ENCODE measurements at regions of chr12 and their contacts with region 1.

Region 1: GRCh38 chr12:32755654-32756475 is at the start of gene YARS2:
- DNase-seq: peak; percentile 96
- H3K4me3 ChIP-seq: peak within 1 kb of the TSS; percentile 92 to 97 (median 94)
- H3K27ac ChIP-seq: peak within 1 kb of the TSS; percentile 84 to 89 (median 88)
- H3K4me1 ChIP-seq: peaks cover 11 to 24% (median 21%) of the 10 kb centered on the region in 4 donors
- H3K27me3 ChIP-seq: peaks cover 0 to 1% (median 0%) of the 10 kb centered on the region in 4 donors
- CTCF ChIP-seq: peak; percentile 73 to 84 (median 79)
- EP300 ChIP-seq: no peak
- POLR2A ChIP-seq: no peak
- total RNA-seq, gene YARS2: 12.3 to 15.0 (median 14.7) TPM

Region 2: GRCh38 chr12:32482226-32482625 is 273.6 kb before region 1 on chr12:
- intact Hi-C with region 1: no loop called
- DNase-seq: no peak
- H3K4me3 ChIP-seq: no peak overlapping the region
- H3K27ac ChIP-seq: no peak overlapping the region
- H3K4me1 ChIP-seq: peaks cover 9 to 20% (median 12%) of the 10 kb centered on the region in 4 donors
- H3K27me3 ChIP-seq: no peaks in the 10 kb centered on the region
- CTCF ChIP-seq: no peak
- EP300 ChIP-seq: no peak
- POLR2A ChIP-seq: no peak

Region 3: GRCh38 chr12:32801269-32801980 is 45.6 kb after region 1 on chr12:
- intact Hi-C with region 1: no loop called
- DNase-seq: no peak
- H3K4me3 ChIP-seq: no peak overlapping the region
- H3K27ac ChIP-seq: no peak overlapping the region
- H3K4me1 ChIP-seq: no peaks in the 10 kb centered on the region
- H3K27me3 ChIP-seq: no peaks in the 10 kb centered on the region
- CTCF ChIP-seq: no peak
- EP300 ChIP-seq: no peak
- POLR2A ChIP-seq: no peak

Region 4: DNA sequence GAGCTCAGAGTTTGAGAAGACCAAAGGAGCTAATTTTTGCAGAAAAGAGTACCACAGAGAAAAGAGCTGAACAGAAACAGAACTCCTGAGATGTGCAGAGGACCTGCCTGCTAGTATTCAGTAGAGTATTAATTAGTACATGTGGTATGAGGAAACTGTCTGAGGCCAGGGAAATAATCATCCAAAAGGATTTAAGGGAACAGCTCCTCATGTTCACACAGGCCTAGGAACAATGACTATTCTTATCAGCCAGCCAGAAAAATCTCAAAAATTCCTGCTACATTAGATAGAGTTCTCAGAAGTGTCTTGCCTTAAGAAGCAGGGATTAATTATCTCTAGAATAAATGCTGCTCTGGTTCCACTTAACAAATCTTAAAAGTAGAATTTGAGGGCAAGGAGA is 104.3 kb after region 1 on chr12:
- intact Hi-C with region 1: no loop called
- DNase-seq: no peak
- H3K4me3 ChIP-seq: no peak overlapping the region
- H3K27ac ChIP-seq: no peak overlapping the region
- H3K4me1 ChIP-seq: peaks cover 0 to 4% (median 0%) of the 10 kb centered on the region in 4 donors
- H3K27me3 ChIP-seq: no peaks in the 10 kb centered on the region
- CTCF ChIP-seq: no peak
- EP300 ChIP-seq: no peak
- POLR2A ChIP-seq: no peak

Region 5: GRCh38 chr12:32918890-32919801 is 163.3 kb after region 1 on chr12:
- intact Hi-C with region 1: loop called (anchors 5 kb)
- DNase-seq: no peak
- H3K4me3 ChIP-seq: no peak overlapping the region
- H3K27ac ChIP-seq: no peak overlapping the region
- H3K4me1 ChIP-seq: peaks cover 0 to 9% (median 4%) of the 10 kb centered on the region in 4 donors
- H3K27me3 ChIP-seq: no peaks in the 10 kb centered on the region
- CTCF ChIP-seq: peak in 1 of 3 experiments; percentile 32
- EP300 ChIP-seq: no peak
- POLR2A ChIP-seq: no peak

Region 6: GRCh38 chr12:34021071-34021470 is 1265.2 kb after region 1 on chr12:
- intact Hi-C with region 1: loop called (anchors 2 kb)
- DNase-seq: no peak
- H3K4me3 ChIP-seq: no peak overlapping the region
- H3K27ac ChIP-seq: peak overlapping the region in 1 of 4 donors; percentile 79
- H3K4me1 ChIP-seq: peaks cover 11 to 21% (median 20%) of the 10 kb centered on the region in 4 donors
- H3K27me3 ChIP-seq: no peaks in the 10 kb centered on the region
- CTCF ChIP-seq: no peak
- EP300 ChIP-seq: no peak
- POLR2A ChIP-seq: no peak